ENCODE measurements at regions of chr1 and their contacts with region 1.

Region 1: GRCh38 chr1:201436393-201436792 is 14.9 kb upstream of the TNNI1 start:
- DNase-seq: no peak
- ATAC-seq: peak in 3 of 4 donors; percentile 31 to 52 (median 39)
- H3K4me3 ChIP-seq: no peak overlapping the region
- H3K27ac ChIP-seq: no peak overlapping the region
- H3K4me1 ChIP-seq: peaks cover 0 to 11% (median 5%) of the 10 kb centered on the region in 12 donors
- H3K27me3 ChIP-seq: no peaks in the 10 kb centered on the region
- CTCF ChIP-seq: peak in 1 of 12 donors; percentile 6
- POLR2A ChIP-seq: no peak

Region 2: DNA sequence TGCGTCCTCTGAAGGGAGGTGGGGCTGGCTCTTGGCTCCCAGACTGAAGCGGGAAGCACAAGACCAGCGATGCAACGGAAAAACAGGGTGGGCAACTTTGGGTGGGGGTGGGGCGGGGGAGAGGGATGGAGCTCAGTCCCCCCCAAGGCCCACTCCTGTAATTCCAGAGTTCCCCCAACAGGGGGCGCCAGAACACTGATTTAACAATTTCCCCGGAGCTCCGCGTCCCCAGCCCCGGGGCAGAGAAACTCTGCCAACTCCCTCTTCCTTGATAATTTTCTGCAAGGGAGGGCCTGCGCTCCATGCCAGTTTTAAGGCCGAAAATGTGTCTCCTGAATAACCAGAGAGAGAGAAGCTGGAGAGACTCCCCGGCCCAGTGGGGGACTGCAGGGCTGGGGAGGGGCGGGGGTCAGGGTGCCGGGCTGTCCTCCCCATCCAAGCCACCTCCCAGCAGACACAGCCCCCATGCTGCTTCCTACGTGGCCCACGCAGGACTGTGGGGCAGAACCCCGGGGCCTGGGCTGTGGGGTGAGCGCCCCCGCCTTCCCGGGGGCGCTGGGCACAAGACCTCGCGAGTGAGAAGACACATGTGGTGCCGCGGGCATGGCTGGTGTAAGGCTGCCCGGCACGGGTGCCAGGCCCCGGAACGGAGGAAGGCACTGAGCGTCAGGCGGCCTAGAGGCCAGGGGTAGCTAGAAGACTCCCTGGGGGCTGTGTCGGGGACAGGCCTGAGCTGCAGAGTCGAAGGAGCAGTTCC is 464.3 kb before region 1 on chr1:
- intact Hi-C with region 1: no loop called
- DNase-seq: peak; percentile 49 to 78 (median 62)
- ATAC-seq: peak in 3 of 4 donors; percentile 27 to 35 (median 33)
- H3K4me3 ChIP-seq: peak overlapping the region in 3 of 12 donors; percentile 7 to 19 (median 17)
- H3K27ac ChIP-seq: no peak overlapping the region
- H3K4me1 ChIP-seq: peaks cover 0 to 11% (median 4%) of the 10 kb centered on the region in 12 donors
- H3K27me3 ChIP-seq: no peaks in the 10 kb centered on the region
- CTCF ChIP-seq: peak; percentile 85 to 99 (median 96)
- POLR2A ChIP-seq: no peak

Region 3: DNA sequence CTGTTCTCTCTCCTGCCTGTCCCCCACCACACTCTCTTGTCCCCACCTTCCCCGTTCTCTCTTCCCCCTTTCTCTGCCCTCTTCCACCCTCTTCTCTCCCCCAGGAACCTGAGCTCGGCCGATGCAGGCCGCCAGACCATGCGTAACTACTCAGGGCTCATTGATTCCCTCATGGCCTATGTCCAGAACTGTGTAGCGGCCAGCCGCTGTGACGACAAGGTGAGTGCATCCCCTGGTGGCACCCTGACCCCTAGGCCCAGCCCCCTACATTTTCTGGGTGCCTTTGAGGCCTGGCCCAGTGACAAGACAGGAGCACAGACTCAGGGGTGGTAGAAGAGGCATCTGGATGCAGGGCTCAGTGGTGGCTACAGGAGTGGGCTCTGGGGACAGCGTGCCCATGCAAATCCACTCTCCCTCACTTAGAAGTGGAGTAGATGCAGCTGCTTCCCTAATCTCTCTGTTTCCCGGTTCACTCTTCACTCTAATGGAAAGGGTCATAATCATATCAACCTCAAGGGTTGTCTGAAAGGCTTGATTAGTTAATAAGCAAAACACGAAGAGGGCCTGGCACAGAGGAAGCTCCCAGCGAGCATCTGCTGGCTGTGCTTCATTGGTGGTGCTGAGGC is 116.1 kb before region 1 on chr1:
- intact Hi-C with region 1: no loop called
- DNase-seq: no peak
- ATAC-seq: no peak
- H3K4me3 ChIP-seq: no peak overlapping the region
- H3K27ac ChIP-seq: no peak overlapping the region
- H3K4me1 ChIP-seq: no peaks in the 10 kb centered on the region
- H3K27me3 ChIP-seq: no peaks in the 10 kb centered on the region
- CTCF ChIP-seq: no peak
- POLR2A ChIP-seq: no peak

Region 4: GRCh38 chr1:201376464-201377374 is 59.7 kb before region 1 on chr1:
- intact Hi-C with region 1: no loop called
- DNase-seq: peak in 1 of 5 donors; percentile 41
- ATAC-seq: peak in 3 of 4 donors; percentile 3 to 9 (median 5)
- H3K4me3 ChIP-seq: peak overlapping the region; percentile 42 to 76 (median 67)
- H3K27ac ChIP-seq: peak overlapping the region; percentile 79 to 99 (median 96)
- H3K4me1 ChIP-seq: peaks cover 0 to 41% (median 10%) of the 10 kb centered on the region in 12 donors
- H3K27me3 ChIP-seq: no peaks in the 10 kb centered on the region
- CTCF ChIP-seq: peak in 9 of 12 donors; percentile 20 to 52 (median 31)
- POLR2A ChIP-seq: no peak

Region 5: GRCh38 chr1:201476670-201477344 is 40.4 kb after region 1 on chr1:
- intact Hi-C with region 1: loop called in 3 of 10 experiments (anchors 2 to 5 kb)
- DNase-seq: no peak
- ATAC-seq: no peak
- H3K4me3 ChIP-seq: no peak overlapping the region
- H3K27ac ChIP-seq: no peak overlapping the region
- H3K4me1 ChIP-seq: peaks cover 5 to 27% (median 20%) of the 10 kb centered on the region in 12 donors
- H3K27me3 ChIP-seq: peaks cover 0 to 5% (median 0%) of the 10 kb centered on the region in 9 donors
- CTCF ChIP-seq: no peak
- POLR2A ChIP-seq: no peak

Region 6: GRCh38 chr1:201481761-201482493 is 45.5 kb after region 1 on chr1:
- intact Hi-C with region 1: loop called in 3 of 10 experiments (anchors 2 to 5 kb)
- DNase-seq: peak; percentile 88 to 93 (median 89)
- ATAC-seq: peak; percentile 82 to 89 (median 86)
- H3K4me3 ChIP-seq: peak overlapping the region in 10 of 12 donors; percentile 13 to 54 (median 40)
- H3K27ac ChIP-seq: peak overlapping the region in 11 of 12 donors; percentile 6 to 98 (median 77)
- H3K4me1 ChIP-seq: peaks cover 5 to 44% (median 31%) of the 10 kb centered on the region in 12 donors
- H3K27me3 ChIP-seq: peaks cover 0 to 6% (median 0%) of the 10 kb centered on the region in 9 donors
- CTCF ChIP-seq: peak; percentile 84 to 97 (median 93)
- POLR2A ChIP-seq: peak in 1 of 2 donors; percentile 10